Activated CD4-positive, alpha-beta T cell treated with anti-CD3 and anti-CD28 coated beads, Interleukin-2, amount 10 ng/mL, durations not matched to agents 24 days and 14 days (primary cell): ENCODE measurements at regions of chr21 and their contacts with region 1.

Region 1: GRCh38 chr21:33259995-33260394 is 6.2 kb upstream of the IL10RB start:
- DNase-seq: no peak
- H3K4me3 Mint-ChIP-seq: no peak overlapping the region
- H3K27ac Mint-ChIP-seq: no peak overlapping the region
- H3K4me1 Mint-ChIP-seq: peaks cover 43% of the 10 kb centered on the region
- H3K27me3 Mint-ChIP-seq: no peaks in the 10 kb centered on the region

Region 2: DNA sequence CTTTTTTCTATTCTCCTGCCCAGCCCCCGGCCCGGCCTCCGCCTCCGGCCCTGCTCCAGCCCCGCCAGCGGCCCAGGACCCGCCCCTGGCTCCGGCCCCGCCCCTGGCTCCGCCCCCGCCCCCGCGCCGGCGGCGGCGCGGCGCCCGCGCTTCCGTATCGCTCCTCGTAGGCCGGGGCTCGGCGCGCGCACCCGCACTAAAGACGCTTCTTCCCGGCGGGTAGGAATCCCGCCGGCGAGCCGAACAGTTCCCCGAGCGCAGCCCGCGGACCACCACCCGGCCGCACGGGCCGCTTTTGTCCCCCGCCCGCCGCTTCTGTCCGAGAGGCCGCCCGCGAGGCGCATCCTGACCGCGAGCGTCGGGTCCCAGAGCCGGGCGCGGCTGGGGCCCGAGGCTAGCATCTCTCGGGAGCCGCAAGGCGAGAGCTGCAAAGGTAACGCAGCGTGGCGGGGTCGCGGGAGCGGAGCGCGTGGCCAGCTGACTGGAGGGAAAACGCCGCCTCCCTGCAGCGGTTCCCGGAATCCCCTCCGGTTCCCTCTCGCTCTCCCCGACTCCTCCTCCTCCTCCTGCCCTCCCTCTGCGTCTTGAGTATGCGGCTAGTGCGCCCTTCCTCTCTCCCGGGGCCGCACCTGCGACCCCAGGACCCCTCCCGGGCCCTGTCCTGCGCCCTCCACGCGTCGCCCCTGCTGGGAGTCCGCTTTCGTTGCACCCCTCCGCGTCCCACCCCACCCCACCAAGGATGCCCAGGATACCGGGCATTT is 30.0 kb before region 1 on chr21 and contains the start of gene IFNAR2:
- intact Hi-C with region 1: loop called (anchors 1 kb)
- DNase-seq: peak; percentile 93
- H3K4me3 Mint-ChIP-seq: peak within 1 kb of the TSS; percentile 84
- H3K27ac Mint-ChIP-seq: peak within 1 kb of the TSS; percentile 89
- H3K4me1 Mint-ChIP-seq: peaks cover 43% of the 10 kb centered on the region
- H3K27me3 Mint-ChIP-seq: peaks cover 2% of the 10 kb centered on the region
- total RNA-seq, gene IFNAR2: 35.2 and 36.7 TPM in 2 replicates

Region 3: DNA sequence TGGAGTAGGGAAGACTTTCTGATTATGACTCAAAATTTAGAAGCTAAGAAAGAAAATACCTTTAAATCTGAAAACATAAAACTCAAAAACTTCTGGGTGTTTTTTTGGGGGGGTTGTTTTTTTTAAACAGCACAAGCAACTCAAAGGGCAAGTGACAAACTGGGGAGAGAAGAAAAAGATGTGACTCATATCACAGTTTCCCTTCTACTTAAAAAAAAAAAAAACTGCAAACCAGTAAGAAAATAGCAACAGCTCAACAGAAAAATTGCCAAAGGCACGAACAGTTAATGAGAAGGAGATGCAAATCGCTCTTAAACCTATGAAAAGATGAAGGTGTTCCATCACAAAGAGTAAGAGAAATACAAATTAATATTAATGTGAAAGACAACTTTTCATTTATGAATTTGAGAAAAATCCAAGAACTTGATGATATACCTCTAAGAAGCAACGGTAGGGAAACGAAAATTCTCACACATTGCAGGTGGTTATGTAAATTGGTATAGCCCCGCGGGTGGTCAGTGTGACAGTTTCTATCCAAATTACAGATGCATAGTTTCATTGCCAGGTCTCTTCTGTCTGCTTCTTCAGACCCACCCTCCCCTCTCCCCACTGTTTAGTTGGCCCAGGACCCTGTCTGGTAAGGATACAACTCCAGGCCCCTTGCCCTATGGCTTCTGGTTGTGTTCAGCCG is 21.3 kb before region 1 on chr21:
- intact Hi-C with region 1: loop called (anchors 2 kb)
- DNase-seq: no peak
- H3K4me3 Mint-ChIP-seq: peak overlapping the region; percentile 65
- H3K27ac Mint-ChIP-seq: peak overlapping the region; percentile 87
- H3K4me1 Mint-ChIP-seq: peaks cover 56% of the 10 kb centered on the region
- H3K27me3 Mint-ChIP-seq: no peaks in the 10 kb centered on the region

Region 4: DNA sequence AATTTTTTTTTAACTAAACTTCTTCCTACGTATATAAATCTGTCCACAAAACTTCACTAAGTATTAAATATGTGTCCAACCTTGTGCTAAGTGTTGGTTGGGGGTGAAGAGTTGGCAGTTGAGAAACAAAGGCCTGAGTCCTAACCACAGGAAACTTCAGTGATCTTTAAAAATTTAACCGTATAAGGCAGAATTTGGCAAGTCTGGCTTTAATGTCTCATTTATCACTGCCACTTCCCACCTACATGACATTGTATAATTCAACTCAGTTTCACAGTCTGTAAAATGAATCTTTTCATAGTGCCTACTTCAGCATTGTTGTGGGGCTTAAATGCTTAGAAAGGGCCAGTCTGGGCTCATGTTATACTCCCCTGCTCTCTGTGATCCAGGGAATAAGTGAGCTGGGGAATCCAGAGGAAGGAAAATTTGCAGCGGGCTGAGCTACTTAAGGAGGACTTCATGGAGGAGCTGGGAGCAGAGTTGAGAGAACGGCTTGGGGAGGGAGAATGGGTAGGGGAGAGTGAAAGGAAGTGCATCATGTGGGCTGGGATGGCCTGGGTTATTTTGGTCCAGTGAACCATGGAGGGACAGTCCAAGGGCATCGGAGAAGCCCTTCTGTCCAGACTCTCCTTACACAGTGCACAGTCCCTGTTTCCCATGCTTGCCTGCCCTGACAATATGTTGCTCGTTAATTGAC is 15.8 kb before region 1 on chr21:
- intact Hi-C with region 1: loop called (anchors 1 kb)
- DNase-seq: no peak
- H3K4me3 Mint-ChIP-seq: peak overlapping the region; percentile 73
- H3K27ac Mint-ChIP-seq: peak overlapping the region; percentile 93
- H3K4me1 Mint-ChIP-seq: peaks cover 60% of the 10 kb centered on the region
- H3K27me3 Mint-ChIP-seq: no peaks in the 10 kb centered on the region

Region 5: GRCh38 chr21:33273039-33273438 is 13.0 kb after region 1 on chr21:
- intact Hi-C with region 1: no loop called
- DNase-seq: no peak
- H3K4me3 Mint-ChIP-seq: no peak overlapping the region
- H3K27ac Mint-ChIP-seq: no peak overlapping the region
- H3K4me1 Mint-ChIP-seq: peaks cover 18% of the 10 kb centered on the region
- H3K27me3 Mint-ChIP-seq: no peaks in the 10 kb centered on the region